Activated CD4-positive, alpha-beta T cell treated with anti-CD3 and anti-CD28 coated beads for 36 hours (primary cell): ENCODE measurements at regions of chr11 and their contacts with region 1.

Region 1: DNA sequence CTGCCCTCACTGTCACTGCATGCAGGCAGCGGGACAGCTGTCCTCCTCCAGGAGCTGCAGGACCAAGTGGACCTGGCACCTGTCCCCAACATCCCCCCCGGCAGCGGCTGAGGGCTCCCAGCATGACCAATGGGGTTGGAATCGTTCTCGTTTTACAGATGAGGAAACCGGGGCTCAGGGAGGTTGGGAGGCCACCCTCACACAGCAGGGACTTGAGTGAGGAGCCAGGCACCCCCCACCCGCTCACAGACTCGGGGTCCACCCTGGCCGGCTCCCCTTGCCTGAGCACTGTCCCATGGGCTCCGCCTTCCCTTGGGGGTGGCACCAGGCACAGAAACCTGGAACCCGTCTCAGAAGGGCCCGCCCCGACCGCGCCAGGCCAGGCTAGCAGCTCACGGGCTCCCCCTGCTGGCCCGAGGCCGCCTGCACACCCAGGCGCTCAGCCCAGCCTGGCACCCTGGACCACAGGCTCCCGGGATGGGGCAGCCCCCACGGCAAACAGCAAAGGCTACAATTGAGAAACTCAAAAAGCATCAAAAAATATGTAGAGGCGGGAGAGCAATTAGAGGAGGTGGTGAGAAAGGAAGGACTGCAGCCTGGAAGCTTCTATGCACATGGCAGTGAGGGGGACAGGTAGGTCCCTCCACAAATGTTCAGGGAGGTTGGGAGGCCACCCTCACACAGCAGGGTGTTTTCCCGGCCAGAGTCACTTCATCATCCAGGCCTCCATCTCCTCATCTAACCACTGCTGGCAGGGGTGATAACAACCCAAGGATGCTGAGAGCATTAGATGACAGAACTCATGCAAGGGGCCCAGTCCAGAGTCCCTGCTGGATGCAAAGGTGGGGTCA is 12.8 kb downstream of the MACROD1 start:
- DNase-seq: peak; percentile 85
- ATAC-seq: peak; percentile 97
- H3K4me3 Mint-ChIP-seq: no peak overlapping the region
- H3K27ac Mint-ChIP-seq: no peak overlapping the region
- H3K4me1 Mint-ChIP-seq: peaks cover 3% of the 10 kb centered on the region
- H3K27me3 Mint-ChIP-seq: no peaks in the 10 kb centered on the region

Region 2: DNA sequence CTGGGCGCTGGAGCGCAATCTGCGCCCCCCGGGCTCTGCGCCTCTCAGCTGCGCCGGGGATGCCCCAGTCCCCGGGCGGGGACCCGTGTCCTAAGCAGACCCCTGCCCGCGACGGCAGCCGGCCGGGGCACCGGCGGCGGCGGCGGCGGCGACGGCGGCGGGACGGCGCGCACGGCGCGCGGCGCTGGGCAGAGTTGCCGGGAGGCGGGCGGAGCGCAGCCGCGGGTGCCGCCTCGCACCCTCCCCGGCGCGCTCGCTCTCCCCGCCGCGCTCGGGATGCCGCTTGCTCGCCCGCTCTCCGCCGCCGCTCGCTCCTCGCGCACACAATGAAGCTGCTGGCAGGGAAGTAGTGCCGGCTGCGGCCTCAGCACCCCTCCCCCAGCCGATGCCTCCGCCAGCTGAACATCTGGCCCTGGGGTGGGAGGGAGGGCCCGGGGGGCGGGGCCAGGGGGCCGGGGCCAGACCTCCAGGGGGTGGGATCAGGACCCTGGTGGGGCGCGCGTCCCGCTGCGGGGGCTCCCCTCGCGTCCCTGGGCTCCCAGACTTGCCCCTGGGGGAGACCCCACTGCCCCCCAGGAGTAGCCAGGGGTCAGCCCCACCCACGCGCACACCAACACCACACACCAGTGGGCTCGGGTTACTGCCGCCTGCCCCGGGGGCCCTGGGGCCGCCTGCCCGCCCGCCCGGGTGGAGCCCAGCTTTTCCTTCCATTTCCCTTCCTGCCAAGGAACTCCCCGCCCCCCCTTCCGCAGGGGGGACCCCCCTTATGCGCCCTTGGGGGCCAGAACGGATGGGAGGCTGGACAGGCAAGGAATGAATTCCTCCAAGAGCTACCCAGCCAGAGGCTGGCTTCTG is 236.0 kb before region 1 on chr11 and contains the start of gene RCOR2:
- CTCF ChIA-PET with region 1: no interaction called
- POLR2A ChIA-PET with region 1: no interaction called
- intact Hi-C with region 1: loop called in 1 of 2 experiments (anchors 5 kb)
- DNase-seq: peak; percentile 81
- ATAC-seq: peak; percentile 68
- H3K4me3 Mint-ChIP-seq: peak within 1 kb of the TSS; percentile 70
- H3K27ac Mint-ChIP-seq: no peak within 1 kb of the TSS
- H3K4me1 Mint-ChIP-seq: peaks cover 12% of the 10 kb centered on the region
- H3K27me3 Mint-ChIP-seq: peaks cover 3% of the 10 kb centered on the region
- total RNA-seq, gene RCOR2: 0.37 TPM

Region 3: GRCh38 chr11:64088162-64089026 is 64.7 kb before region 1 on chr11:
- CTCF ChIA-PET with region 1: no interaction called
- POLR2A ChIA-PET with region 1: no interaction called
- intact Hi-C with region 1: loop called in 1 of 2 experiments (anchors 1 kb)
- DNase-seq: peak; percentile 22
- ATAC-seq: peak; percentile 39
- H3K4me3 Mint-ChIP-seq: no peak overlapping the region
- H3K27ac Mint-ChIP-seq: no peak overlapping the region
- H3K4me1 Mint-ChIP-seq: peaks cover 3% of the 10 kb centered on the region
- H3K27me3 Mint-ChIP-seq: no peaks in the 10 kb centered on the region